A673 (cell line): ENCODE measurements at regions of chr5 and their contacts with region 1.

Region 1: DNA sequence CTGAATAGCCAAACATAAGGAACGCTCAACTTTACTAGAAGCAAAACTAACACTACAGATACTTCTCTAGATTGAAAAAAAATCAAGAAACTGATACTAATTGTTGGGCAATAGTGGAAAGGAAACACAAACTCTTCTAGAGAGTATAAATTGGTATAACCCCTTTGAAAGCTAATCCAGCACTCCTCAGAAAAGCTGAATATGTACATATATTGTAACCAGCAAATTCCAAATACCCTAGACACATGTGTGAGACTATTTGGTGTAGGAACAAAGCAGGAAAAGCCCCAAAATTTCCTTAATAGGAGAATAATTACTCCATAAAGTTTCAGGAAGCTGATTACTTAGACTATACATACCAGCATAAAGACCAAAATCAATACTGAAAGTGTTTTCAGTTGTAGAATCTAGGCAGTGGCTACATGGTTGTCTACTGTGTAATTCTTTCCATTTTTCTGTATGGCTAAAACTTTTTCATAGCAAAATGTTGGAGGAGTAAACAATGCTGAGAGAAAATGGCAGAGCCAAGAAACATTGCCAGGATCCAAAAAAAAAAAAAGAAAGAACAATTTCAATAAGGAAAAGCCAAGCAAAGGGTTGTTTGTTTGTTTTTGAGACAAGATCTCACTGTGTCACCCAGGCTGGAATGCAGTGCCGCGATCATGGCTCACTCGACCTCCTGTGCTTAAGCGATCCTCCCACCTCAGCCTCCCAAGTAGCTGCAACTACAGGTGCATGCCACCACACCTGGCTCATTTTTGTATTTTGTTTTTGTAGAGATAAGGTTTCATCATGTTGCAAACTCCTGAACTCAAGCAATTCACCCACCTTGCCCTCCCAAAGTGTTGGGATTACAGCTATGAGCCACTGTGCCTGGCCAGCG is 15.0 kb downstream of the SKP1 start:
- DNase-seq: no peak
- H3K4me3 ChIP-seq: no peak overlapping the region
- H3K27ac ChIP-seq: no peak overlapping the region
- H3K4me1 ChIP-seq: no peaks in the 10 kb centered on the region
- H3K27me3 ChIP-seq: no peaks in the 10 kb centered on the region
- CTCF ChIP-seq: no peak

Region 2: GRCh38 chr5:134018154-134018985 is 143.4 kb before region 1 on chr5:
- CTCF ChIA-PET with region 1: interaction called, 15 read pairs
- POLR2A ChIA-PET with region 1: no interaction called
- intact Hi-C with region 1: no loop called
- DNase-seq: no peak
- H3K4me3 ChIP-seq: no peak overlapping the region
- H3K27ac ChIP-seq: no peak overlapping the region
- H3K4me1 ChIP-seq: no peaks in the 10 kb centered on the region
- H3K27me3 ChIP-seq: no peaks in the 10 kb centered on the region
- CTCF ChIP-seq: no peak